ENCODE measurements at regions of chr7 and their contacts with region 1.

Region 1: GRCh38 chr7:134900166-134900982 is 85.9 kb upstream of the AGBL3 start:
- DNase-seq: peak; percentile 35
- ATAC-seq: peak; percentile 83
- H3K4me3 ChIP-seq: peak overlapping the region; percentile 51
- H3K27ac ChIP-seq: peak overlapping the region; percentile 37; the same call in 1 of the 2 replicates
- H3K4me1 ChIP-seq: peaks cover 20% of the 10 kb centered on the region
- H3K27me3 ChIP-seq: no peaks in the 10 kb centered on the region
- CTCF ChIP-seq: no peak
- EP300 ChIP-seq: peak in 1 of 2 experiments; percentile 40; a peak in 1 of 4 replicates
- POLR2A ChIP-seq: no peak
- RAD21 ChIP-seq: no peak

Region 2: DNA sequence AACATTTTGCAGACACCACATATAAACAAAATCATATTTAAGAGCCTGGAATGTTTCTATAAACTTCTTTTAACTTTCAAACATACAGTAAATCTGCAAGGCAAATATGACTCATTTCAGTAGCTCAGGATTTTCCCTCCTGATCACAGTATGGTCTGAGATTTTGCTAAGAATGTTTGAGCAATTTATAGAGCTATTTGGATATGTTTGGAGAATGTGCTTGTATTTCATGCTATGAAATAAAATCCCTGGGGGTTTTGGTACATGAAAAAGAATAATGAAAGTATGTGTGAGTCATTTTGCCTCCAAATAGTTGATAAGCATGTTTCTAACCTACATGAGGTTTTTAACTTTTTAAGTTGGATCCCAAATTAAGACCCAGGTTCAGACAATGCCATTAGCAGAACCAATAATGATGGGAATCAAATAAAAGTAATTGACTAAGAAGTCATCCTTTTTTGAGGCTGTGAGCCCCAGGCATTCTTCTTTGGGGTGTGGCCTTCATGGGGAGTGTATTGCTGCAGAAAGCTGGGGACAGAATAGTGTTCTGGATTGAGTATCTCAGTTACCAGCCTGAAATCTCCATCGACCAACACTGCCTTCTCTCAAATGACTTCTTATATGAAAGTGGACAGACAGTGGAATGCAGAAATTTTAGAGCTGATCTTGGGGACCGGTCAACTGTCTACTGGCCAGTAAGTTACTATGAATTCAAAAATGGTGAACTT is 19.8 kb after region 1 on chr7:
- CTCF ChIA-PET with region 1: interaction called, 4 read pairs
- POLR2A ChIA-PET with region 1: interaction called, 6 read pairs
- RAD21 ChIA-PET with region 1: interaction called, 9 read pairs
- SMC1A ChIA-PET with region 1: interaction called, 14 read pairs
- in situ Hi-C with region 1: no loop called
- intact Hi-C with region 1: no loop called
- DNase-seq: no peak
- ATAC-seq: peak; percentile 87
- H3K4me3 ChIP-seq: no peak overlapping the region
- H3K27ac ChIP-seq: no peak overlapping the region
- H3K4me1 ChIP-seq: peaks cover 11% of the 10 kb centered on the region; the same call in 1 of the 2 replicates
- H3K27me3 ChIP-seq: no peaks in the 10 kb centered on the region
- CTCF ChIP-seq: no peak
- EP300 ChIP-seq: peak in 1 of 2 experiments; percentile 42; a peak in 1 of 4 replicates
- POLR2A ChIP-seq: no peak
- RAD21 ChIP-seq: no peak

Region 3: DNA sequence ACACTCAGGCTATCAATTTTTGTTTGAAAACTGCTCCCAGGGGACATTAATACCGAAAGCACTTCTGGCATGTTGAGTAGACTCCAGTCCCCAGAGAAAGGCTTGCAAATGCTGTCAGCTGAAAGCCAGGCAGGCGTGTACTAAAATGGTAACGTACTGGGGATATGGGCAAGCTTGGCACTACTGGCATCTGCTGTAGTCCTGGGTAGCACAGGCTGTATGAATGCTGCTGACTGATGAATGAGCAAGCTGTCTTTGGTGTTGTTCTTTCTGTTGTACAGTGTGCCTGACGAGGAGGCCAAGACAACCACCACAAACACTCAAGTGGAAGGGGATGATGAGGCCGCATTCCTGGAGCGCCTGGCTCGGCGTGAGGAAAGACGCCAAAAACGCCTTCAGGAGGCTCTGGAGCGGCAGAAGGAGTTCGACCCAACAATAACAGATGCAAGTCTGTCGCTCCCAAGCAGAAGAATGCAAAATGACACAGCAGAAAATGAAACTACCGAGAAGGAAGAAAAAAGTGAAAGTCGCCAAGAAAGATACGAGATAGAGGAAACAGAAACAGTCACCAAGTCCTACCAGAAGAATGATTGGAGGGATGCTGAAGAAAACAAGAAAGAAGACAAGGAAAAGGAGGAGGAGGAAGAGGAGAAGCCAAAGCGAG is 32.5 kb after region 1 on chr7:
- CTCF ChIA-PET with region 1: interaction called, 5 read pairs
- POLR2A ChIA-PET with region 1: interaction called, 4 read pairs
- RAD21 ChIA-PET with region 1: interaction called, 3 read pairs
- SMC1A ChIA-PET with region 1: interaction called, 27 read pairs
- in situ Hi-C with region 1: no loop called
- intact Hi-C with region 1: no loop called
- DNase-seq: peak; percentile 23
- ATAC-seq: peak; percentile 85
- H3K4me3 ChIP-seq: peak overlapping the region; percentile 16; the same call in 1 of the 2 replicates
- H3K27ac ChIP-seq: peak overlapping the region; percentile 33
- H3K4me1 ChIP-seq: peaks cover 8% of the 10 kb centered on the region; the same call in 1 of the 2 replicates
- H3K27me3 ChIP-seq: no peaks in the 10 kb centered on the region
- CTCF ChIP-seq: no peak
- EP300 ChIP-seq: no peak
- POLR2A ChIP-seq: no peak
- RAD21 ChIP-seq: no peak